Activated B cell treated with CpG ODN at 0.5 μM for 24 hours (primary cell): ENCODE measurements at regions of chr11 and their contacts with region 1.

Region 1: DNA sequence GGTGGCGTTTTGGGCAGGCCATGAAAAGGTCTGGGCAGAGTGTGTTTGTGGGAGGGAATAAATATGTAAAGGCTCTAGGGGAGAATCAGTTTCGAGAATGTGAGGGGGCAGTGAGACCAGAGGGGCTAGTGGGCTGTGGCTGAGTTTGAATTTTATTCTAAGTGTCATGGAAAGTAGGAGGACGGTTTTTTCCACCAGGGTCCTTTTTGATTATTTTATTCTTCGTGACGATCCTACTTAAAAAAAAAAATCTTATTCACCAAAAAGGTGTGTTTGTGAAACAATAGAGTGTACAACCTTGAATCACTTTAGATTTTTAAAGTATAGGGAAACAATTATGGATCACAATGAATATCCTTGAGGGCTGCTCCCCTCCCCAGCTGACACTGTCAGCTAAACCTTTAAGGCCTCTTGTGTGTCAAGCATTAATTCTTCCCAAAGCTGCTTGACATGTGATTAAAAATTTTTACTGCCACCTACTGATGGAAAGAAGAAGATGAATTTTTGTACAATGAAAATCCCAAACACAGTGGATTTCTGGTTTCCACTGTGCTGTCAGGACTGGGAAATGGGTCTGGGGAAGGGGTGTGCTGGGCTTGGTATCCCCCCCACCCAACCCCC is 107.5 kb upstream of the OR4B1 start:
- DNase-seq: no peak
- ATAC-seq: peak; percentile 6
- H3K4me3 Mint-ChIP-seq: peak overlapping the region; percentile 75
- H3K27ac Mint-ChIP-seq: peak overlapping the region; percentile 88
- H3K4me1 Mint-ChIP-seq: peaks cover 77% of the 10 kb centered on the region
- H3K27me3 Mint-ChIP-seq: no peaks in the 10 kb centered on the region
- CTCF ChIP-seq: no peak

Region 2: GRCh38 chr11:47552566-47553416 is 556.4 kb before region 1 on chr11 and contains the start of gene CELF1:
- CTCF ChIA-PET with region 1: no interaction called
- POLR2A ChIA-PET with region 1: interaction called, 3 read pairs
- intact Hi-C with region 1: loop called (anchors 1 kb)
- DNase-seq: peak; percentile 93
- ATAC-seq: peak; percentile 94
- H3K4me3 Mint-ChIP-seq: peak within 1 kb of the TSS; percentile 96
- H3K27ac Mint-ChIP-seq: peak within 1 kb of the TSS; percentile 97
- H3K4me1 Mint-ChIP-seq: peaks cover 49% of the 10 kb centered on the region
- H3K27me3 Mint-ChIP-seq: no peaks in the 10 kb centered on the region
- CTCF ChIP-seq: peak; percentile 33
- total RNA-seq, gene CELF1: 129 and 136 TPM in 2 replicates

Region 3: GRCh38 chr11:47766305-47767227 is 342.6 kb before region 1 on chr11:
- CTCF ChIA-PET with region 1: no interaction called
- POLR2A ChIA-PET with region 1: interaction called, 12 read pairs
- intact Hi-C with region 1: loop called (anchors 1 kb)
- DNase-seq: peak; percentile 63
- ATAC-seq: peak; percentile 20
- H3K4me3 Mint-ChIP-seq: peak overlapping the region; percentile 97
- H3K27ac Mint-ChIP-seq: peak overlapping the region; percentile 100
- H3K4me1 Mint-ChIP-seq: peaks cover 33% of the 10 kb centered on the region
- H3K27me3 Mint-ChIP-seq: no peaks in the 10 kb centered on the region
- CTCF ChIP-seq: no peak

Region 4: DNA sequence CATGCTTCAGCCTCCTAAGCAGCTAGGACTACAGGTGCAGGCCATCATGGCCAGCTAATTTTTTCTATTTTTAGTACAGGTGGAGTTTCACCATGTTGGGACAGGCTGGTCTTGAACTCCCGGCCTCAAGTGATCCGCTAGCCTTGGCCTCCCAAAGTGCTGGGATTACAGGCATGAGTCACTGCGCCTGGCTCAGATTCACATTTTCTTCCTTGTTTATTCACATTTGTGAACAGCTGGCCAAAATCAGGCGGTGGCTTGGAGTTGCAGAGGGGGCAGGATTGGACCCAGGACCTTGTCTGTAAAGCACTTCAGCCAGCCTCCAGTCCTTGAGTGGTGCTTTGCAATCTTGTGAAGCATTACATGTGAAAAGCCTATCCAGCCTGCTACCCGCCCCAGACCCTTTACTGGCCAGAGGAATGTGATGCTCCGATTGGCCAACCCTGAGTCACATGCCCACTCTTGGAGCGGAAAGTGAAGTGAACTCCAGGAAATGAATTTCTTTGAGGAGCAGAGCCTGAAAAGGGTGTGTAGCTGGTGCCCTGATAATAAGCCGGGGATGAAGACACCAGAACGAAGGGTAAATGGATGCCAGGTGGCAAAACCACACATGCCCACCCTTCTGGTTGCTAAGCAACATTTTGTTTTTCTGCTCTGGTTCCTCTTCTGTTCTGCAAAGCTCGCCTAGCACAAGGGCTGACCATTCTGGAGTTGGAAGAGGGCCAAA is 191.3 kb before region 1 on chr11:
- CTCF ChIA-PET with region 1: no interaction called
- POLR2A ChIA-PET with region 1: interaction called, 4 read pairs
- intact Hi-C with region 1: loop called (anchors 1 kb)
- DNase-seq: peak; percentile 45
- ATAC-seq: peak; percentile 55
- H3K4me3 Mint-ChIP-seq: peak overlapping the region; percentile 53
- H3K27ac Mint-ChIP-seq: peak overlapping the region; percentile 99
- H3K4me1 Mint-ChIP-seq: peaks cover 91% of the 10 kb centered on the region
- H3K27me3 Mint-ChIP-seq: no peaks in the 10 kb centered on the region
- CTCF ChIP-seq: no peak

Region 5: DNA sequence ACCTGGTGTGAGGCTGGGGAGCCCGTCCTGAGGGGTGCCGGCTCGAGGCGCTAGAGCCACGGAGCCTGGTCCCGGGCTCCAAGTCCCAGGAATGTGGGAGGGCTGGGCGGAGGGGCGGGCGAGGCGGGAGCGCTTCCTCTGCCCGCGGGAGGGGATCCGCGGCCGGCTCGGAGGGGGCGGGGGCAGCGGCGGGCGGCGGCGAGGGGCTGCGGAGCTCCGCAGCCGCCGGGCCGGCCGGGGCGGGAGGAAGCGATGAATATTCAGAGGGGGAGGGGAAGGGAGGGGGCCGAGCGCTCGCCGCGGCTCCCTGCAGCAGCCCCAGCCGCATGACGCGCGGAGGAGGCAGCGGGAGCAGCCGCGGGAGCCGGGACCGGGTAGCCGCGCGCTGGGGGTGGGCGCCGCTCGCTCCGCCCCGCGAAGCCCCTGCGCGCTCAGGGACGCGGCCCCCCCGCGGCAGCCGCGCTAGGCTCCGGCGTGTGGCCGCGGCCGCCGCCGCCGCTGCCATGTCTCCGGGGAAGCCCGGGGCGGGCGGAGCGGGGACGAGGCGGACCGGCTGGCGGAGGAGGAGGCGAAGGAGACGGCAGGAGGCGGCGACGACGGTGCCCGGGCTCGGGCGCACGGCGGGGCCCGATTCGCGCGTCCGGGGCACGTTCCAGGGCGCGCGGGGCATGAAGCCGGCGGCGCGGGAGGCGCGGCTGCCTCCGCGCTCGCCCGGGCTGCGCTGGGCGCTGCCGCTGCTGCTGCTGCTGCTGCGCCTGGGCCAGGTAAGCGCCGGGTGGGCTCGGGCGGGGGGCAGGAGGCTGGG is 128.7 kb before region 1 on chr11 and contains the start of gene PTPRJ:
- CTCF ChIA-PET with region 1: interaction called, 3 read pairs
- POLR2A ChIA-PET with region 1: interaction called, 8 read pairs
- intact Hi-C with region 1: loop called (anchors 1 kb)
- DNase-seq: peak; percentile 71
- ATAC-seq: peak; percentile 66
- H3K4me3 Mint-ChIP-seq: peak within 1 kb of the TSS; percentile 86
- H3K27ac Mint-ChIP-seq: peak within 1 kb of the TSS; percentile 2
- H3K4me1 Mint-ChIP-seq: peaks cover 33% of the 10 kb centered on the region
- H3K27me3 Mint-ChIP-seq: no peaks in the 10 kb centered on the region
- CTCF ChIP-seq: no peak
- total RNA-seq, gene PTPRJ: 18.8 and 19.2 TPM in 2 replicates

Region 6: DNA sequence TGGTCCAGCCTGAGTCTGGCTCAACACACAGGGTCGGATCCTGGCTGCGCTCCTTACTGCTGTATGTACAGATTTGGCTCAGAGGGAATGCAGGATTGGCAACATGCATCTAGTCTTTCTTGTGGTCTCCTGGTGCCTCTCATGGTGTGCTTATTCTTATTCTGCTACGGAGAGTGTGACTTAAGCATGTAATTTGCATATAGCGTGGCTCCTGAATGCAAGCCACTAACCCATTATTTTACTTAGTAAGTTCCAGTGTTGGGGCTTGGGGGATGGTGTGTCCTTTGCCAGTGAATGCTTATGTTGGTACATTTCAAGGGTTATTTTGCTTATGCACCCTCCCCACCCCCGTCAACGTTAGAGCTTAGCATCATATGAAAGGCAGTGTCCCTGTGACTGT is 77.6 kb before region 1 on chr11:
- CTCF ChIA-PET with region 1: interaction called, 11 read pairs
- POLR2A ChIA-PET with region 1: interaction called, 11 read pairs
- intact Hi-C with region 1: no loop called
- DNase-seq: no peak
- ATAC-seq: peak; percentile 60
- H3K4me3 Mint-ChIP-seq: no peak overlapping the region
- H3K27ac Mint-ChIP-seq: peak overlapping the region; percentile 85
- H3K4me1 Mint-ChIP-seq: peaks cover 61% of the 10 kb centered on the region
- H3K27me3 Mint-ChIP-seq: no peaks in the 10 kb centered on the region
- CTCF ChIP-seq: no peak